ENCODE measurements at regions of chr14 and their contacts with region 1.

Region 1: GRCh38 chr14:35944847-35945246 is 118.7 kb downstream of the BRMS1L start:
- DNase-seq: peak; percentile 6
- H3K4me3 ChIP-seq: no peak overlapping the region
- H3K27ac ChIP-seq: no peak overlapping the region
- H3K4me1 ChIP-seq: no peaks in the 10 kb centered on the region
- H3K27me3 ChIP-seq: peaks cover 1% of the 10 kb centered on the region
- CTCF ChIP-seq: peak; percentile 31 to 38

Region 2: DNA sequence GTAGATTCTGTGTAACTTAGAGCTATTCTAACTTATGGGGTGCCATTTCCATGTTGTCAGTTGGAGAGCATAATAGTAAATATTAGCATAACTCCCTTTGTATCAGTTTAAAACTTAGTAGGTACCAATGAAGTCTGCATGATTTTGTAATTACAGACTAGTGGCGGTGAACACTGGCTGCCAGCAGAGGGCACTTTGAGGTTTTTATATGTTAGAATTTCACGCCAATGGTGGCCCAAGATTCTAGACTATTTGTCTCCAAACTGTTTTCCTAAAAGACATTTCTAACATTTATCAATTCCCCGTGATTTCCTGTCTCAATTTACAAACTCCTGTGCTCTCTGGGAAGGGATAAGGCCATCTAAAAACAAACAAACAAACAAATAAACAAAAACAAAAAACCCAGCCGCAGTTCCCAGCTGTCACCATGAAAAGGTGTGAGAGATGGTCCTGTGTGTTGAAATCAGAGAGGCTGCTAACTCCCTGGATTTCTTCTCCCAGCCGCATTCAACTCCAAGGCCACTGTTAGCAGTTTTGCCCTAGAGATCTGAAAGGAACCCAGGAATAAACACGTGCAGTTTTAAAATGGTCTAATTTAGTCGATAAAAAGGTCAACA is 61.1 kb before region 1 on chr14:
- CTCF ChIA-PET with region 1: no interaction called
- dilution Hi-C with region 1: no loop called
- in situ Hi-C with region 1: no loop called
- intact Hi-C with region 1: loop called (anchors 2 kb)
- DNase-seq: no peak
- H3K4me3 ChIP-seq: no peak overlapping the region
- H3K27ac ChIP-seq: no peak overlapping the region
- H3K4me1 ChIP-seq: peaks cover 8% of the 10 kb centered on the region
- H3K27me3 ChIP-seq: no peaks in the 10 kb centered on the region
- CTCF ChIP-seq: peak; percentile 72 to 75